ENCODE measurements at regions of chr1 and their contacts with region 1.

Region 1: DNA sequence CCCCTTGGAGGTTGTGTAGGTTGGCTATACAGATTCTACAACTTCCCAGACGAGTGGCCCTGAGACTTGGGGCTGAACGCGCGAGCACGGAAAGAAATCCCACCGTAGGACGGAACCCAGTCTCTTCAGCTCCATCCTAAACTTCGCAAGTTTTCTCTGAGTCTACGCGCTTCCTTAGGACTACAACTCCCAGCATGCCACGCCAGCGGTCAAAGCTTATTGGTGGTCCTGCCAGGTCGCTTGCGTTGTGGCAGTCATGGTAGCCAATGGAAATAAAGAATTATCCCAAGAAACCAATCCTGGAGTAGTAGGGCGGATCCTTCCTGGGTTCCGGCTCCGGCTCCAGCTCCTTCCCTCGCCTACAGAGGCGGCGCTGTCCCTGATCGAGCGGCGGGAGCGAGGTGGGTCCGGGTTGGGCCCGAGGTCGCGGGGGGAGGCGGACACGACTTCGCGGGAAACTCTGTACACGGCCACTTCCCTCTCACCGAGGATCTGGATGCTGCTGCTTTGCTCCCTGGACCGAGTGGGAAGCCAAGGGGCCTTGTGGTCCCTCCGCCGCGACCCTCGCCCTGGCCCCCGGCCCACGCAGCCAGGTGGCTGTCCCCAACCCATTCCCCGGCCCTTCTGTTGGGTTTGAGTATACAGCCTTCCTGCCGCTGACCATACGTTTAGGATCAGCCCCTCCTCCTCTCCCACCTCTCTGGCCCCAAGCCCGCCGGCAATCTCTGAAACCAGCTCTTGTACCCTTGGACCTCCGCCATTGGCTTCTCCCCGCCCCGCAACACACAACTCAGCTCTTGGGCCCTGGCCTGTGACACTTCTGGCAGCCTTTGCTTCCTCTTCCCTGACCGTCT is at the start of gene ZNF691:
- DNase-seq: peak; percentile 96

Region 2: DNA sequence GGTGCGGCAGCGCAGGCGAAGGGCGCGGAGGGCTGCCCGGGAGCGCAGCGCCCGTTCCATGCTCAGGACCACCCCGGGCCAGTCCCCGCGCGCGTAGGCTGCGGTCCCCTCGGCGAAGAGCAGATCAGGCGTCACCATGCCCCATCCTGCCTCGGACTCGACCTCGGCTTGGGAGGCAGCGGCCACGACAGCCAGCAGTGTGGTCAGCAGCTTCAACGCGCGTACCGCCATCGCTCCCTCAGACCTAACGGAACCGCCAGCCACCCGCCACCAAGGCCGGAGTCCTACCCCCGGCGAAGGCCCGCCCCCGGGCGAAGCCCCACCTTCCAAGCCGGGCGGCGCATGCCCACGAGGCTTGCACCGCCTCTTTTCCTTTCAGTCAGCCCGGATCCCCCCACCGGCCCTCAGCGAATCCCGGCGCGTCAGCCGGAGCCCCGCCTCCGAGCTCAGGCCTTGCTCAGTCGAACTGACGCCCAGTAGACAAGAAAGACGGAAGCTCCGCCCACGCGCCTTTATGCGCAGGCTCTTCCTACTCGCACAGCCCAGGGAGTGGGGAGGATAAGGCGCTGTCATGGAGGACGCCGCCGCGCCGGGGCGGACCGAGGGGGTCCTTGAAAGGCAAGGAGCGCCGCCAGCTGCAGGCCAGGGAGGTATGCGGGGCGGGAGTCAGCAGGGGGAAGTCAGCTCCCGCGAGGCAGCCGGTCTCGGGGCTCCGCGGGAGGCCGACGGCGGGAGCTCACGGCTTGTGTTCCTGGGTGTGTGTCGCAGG is 79.6 kb before region 1 on chr1 and contains the starts of genes C1orf50 and P3H1:
- CTCF ChIA-PET with region 1: no interaction called
- POLR2A ChIA-PET with region 1: interaction called, 37 read pairs
- DNase-seq: peak; percentile 95

Region 3: GRCh38 chr1:42793824-42794223 is 52.7 kb before region 1 on chr1:
- CTCF ChIA-PET with region 1: no interaction called
- POLR2A ChIA-PET with region 1: interaction called, 12 read pairs
- DNase-seq: no peak

Region 4: DNA sequence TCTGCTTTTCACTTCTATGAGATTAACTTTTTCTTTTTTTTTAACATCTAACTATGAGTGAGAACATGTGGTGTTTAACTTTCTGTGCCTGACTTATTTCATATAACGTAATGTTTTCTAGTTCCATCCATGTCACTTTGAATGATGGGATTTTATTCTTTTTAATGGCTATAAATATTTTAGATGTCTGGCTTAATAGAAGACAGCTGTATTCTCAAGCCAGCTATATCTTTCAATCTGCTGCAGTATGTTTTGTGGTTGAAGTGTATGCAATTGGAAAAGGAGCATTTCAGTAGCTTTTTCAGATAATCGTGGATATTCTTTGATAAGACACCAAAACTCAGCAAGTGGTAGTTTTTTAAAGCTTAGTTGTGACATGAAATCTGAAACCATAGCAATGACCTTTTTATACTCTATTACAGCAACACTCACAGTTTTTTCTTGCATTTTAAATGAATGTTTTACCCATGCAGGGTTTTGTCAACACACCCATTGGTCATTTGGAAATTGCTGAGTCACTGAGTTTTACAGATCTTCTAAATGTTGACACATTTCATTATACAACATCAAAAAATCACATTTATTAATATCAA is 23.6 kb before region 1 on chr1:
- CTCF ChIA-PET with region 1: interaction called, 4 read pairs
- POLR2A ChIA-PET with region 1: interaction called, 75 read pairs
- DNase-seq: no peak

Region 5: GRCh38 chr1:42860339-42861013 is 14.0 kb after region 1 on chr1:
- CTCF ChIA-PET with region 1: interaction called, 3 read pairs
- POLR2A ChIA-PET with region 1: interaction called, 14 read pairs
- DNase-seq: no peak

Measured in HEK293T (cell line).